ENCODE measurements at regions of chr12 and their contacts with region 1.

Region 1: DNA sequence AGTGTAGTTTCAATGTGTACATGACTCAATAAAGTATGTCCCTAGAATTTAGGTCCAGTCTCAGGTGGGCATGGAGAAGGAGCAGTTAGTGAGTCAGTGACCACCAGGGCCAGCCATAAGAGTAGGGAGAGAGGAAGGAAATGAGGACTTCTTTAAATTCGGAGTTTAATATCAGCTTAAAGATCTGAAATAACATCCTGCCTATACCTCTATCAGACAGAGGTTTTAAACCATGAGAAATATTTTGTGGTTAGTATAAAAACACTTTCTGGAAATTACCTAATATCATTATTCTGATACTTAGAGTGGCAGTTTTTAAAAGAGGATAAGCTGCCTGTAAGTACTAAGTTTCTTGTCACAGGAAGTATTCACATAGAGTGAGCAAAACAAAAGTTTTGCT is 61.7 kb upstream of the ST8SIA1 start:
- DNase-seq: peak in 5 of 9 experiments; percentile 6 to 66 (median 46)
- ATAC-seq: peak; percentile 82
- H3K4me3 ChIP-seq: no peak overlapping the region
- H3K4me3 Mint-ChIP-seq: peak overlapping the region; percentile 45
- H3K27ac ChIP-seq: peak overlapping the region in 1 of 2 experiments; percentile 59
- H3K27ac Mint-ChIP-seq: peak overlapping the region; percentile 85
- H3K4me1 ChIP-seq: peaks cover 34% of the 10 kb centered on the region
- H3K4me1 Mint-ChIP-seq: peaks cover 31% of the 10 kb centered on the region
- H3K27me3 ChIP-seq: no peaks in the 10 kb centered on the region
- H3K27me3 Mint-ChIP-seq: no peaks in the 10 kb centered on the region
- CTCF ChIP-seq: no peak

Region 2: GRCh38 chr12:22409377-22410164 is 13.3 kb after region 1 on chr12:
- CTCF ChIA-PET with region 1: interaction called, 6 read pairs
- POLR2A ChIA-PET with region 1: interaction called, 16 read pairs
- intact Hi-C with region 1: loop called in 1 of 2 experiments (anchors 1 kb)
- DNase-seq: peak in 8 of 9 experiments; percentile 19 to 92 (median 53)
- ATAC-seq: peak; percentile 84
- H3K4me3 ChIP-seq: peak overlapping the region in 1 of 2 experiments; percentile 56
- H3K4me3 Mint-ChIP-seq: peak overlapping the region; percentile 81
- H3K27ac ChIP-seq: peak overlapping the region; percentile 27 to 78
- H3K27ac Mint-ChIP-seq: peak overlapping the region; percentile 95
- H3K4me1 ChIP-seq: peaks cover 7% of the 10 kb centered on the region
- H3K4me1 Mint-ChIP-seq: peaks cover 30% of the 10 kb centered on the region
- H3K27me3 ChIP-seq: no peaks in the 10 kb centered on the region
- H3K27me3 Mint-ChIP-seq: no peaks in the 10 kb centered on the region
- CTCF ChIP-seq: no peak

Measured in CD8-positive, alpha-beta T cell (primary cell).